ENCODE measurements at regions of chr10 and their contacts with region 1.

Region 1: GRCh38 chr10:80699602-80700039 is 161.9 kb downstream of the SH2D4B start:
- DNase-seq: peak; percentile 87
- H3K4me3 Mint-ChIP-seq: no peak overlapping the region
- H3K27ac Mint-ChIP-seq: no peak overlapping the region
- H3K4me1 Mint-ChIP-seq: no peaks in the 10 kb centered on the region
- H3K27me3 Mint-ChIP-seq: no peaks in the 10 kb centered on the region

Region 2: GRCh38 chr10:80686734-80687475 is 12.7 kb before region 1 on chr10:
- CTCF ChIA-PET with region 1: interaction called, 10 read pairs
- intact Hi-C with region 1: no loop called
- DNase-seq: no peak
- H3K4me3 Mint-ChIP-seq: no peak overlapping the region
- H3K27ac Mint-ChIP-seq: no peak overlapping the region
- H3K4me1 Mint-ChIP-seq: no peaks in the 10 kb centered on the region
- H3K27me3 Mint-ChIP-seq: peaks cover 8% of the 10 kb centered on the region

Region 3: DNA sequence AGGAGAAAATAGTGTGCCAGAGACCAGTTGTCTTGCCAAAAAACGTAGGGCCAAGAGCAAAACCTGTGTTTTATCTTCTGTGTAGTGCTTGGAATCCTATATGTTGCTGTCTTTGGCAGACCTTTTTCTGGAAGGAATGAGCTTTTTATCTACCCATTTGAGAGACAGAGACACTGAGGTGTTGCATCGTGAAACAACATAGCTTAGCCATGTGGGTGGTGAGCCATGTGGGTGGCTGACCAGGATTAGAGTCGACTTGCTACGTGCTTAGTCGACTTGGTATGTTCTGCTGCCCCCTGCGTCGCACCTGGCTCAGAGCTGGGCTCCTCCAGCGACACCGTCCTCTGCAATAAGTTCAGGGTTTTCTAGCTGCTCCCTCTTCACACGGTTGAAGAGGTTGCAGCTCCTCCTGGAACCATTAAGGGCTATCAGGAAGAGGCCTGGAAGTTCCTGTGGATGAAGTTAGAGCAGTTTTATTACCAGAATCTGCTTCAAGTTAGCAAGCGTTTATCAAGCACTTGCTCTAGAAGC is 13.8 kb after region 1 on chr10:
- CTCF ChIA-PET with region 1: interaction called, 15 read pairs
- intact Hi-C with region 1: no loop called
- DNase-seq: no peak
- H3K4me3 Mint-ChIP-seq: no peak overlapping the region
- H3K27ac Mint-ChIP-seq: no peak overlapping the region
- H3K4me1 Mint-ChIP-seq: no peaks in the 10 kb centered on the region
- H3K27me3 Mint-ChIP-seq: no peaks in the 10 kb centered on the region

Region 4: DNA sequence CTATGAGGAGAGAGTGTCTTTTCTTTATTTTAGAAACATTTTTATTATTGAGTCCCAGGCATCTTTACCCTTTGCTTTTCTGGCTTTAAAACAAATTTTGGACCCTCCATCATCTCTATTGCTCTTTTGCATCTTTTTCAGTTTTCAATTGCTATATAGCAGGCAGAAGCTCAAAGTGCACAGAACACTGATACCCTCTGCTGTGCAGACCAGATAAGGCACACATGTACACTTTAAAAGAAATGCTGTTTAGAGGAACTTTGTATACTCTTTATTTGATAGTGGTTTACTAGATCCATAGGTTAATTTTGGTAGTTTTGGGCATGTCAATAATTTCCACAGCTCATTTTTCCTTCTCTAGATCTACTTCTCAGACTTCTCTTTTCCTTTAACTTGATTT is 162.3 kb after region 1 on chr10:
- CTCF ChIA-PET with region 1: interaction called, 3 read pairs
- intact Hi-C with region 1: loop called (anchors 1 kb)
- DNase-seq: no peak
- H3K4me3 Mint-ChIP-seq: no peak overlapping the region
- H3K27ac Mint-ChIP-seq: no peak overlapping the region
- H3K4me1 Mint-ChIP-seq: no peaks in the 10 kb centered on the region
- H3K27me3 Mint-ChIP-seq: peaks cover 6% of the 10 kb centered on the region

Region 5: GRCh38 chr10:80924063-80924952 is 224.7 kb after region 1 on chr10:
- CTCF ChIA-PET with region 1: interaction called, 22 read pairs
- intact Hi-C with region 1: loop called (anchors 1 kb)
- DNase-seq: peak; percentile 42
- H3K4me3 Mint-ChIP-seq: no peak overlapping the region
- H3K27ac Mint-ChIP-seq: no peak overlapping the region
- H3K4me1 Mint-ChIP-seq: no peaks in the 10 kb centered on the region
- H3K27me3 Mint-ChIP-seq: peaks cover 12% of the 10 kb centered on the region

Region 6: DNA sequence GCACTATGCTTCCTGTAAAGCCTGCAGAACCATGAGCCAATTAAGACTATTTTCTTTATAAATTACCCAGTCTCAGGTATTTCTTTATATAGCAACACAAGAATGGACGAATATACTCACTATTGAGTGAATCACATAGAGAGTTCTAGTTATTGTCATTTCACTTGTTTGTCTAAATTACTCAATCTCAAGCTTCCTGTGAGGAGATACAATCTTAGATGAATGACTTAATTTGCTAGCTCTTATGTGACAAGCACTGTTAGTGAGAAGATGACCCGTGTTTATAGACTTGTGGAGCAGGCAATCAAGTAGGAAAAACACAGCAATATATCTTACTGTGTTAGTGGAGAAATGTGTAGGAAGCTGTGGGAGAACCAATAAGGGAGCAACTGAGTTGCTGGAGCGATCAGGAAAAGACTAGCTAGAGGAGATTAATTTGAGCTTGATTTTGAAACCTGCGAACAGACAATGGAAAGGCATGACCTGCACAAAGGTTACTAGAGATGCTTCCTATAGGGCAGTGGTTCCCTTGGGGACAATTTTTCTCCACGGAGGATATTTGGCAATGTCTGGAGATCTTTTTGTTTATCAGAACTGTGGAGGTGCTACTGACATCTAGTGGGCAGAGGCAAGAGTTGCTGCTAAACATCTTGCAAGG is 319.2 kb after region 1 on chr10:
- CTCF ChIA-PET with region 1: interaction called, 17 read pairs
- intact Hi-C with region 1: loop called (anchors 1 kb)
- DNase-seq: peak; percentile 45
- H3K4me3 Mint-ChIP-seq: no peak overlapping the region
- H3K27ac Mint-ChIP-seq: no peak overlapping the region
- H3K4me1 Mint-ChIP-seq: no peaks in the 10 kb centered on the region
- H3K27me3 Mint-ChIP-seq: peaks cover 2% of the 10 kb centered on the region

Region 7: DNA sequence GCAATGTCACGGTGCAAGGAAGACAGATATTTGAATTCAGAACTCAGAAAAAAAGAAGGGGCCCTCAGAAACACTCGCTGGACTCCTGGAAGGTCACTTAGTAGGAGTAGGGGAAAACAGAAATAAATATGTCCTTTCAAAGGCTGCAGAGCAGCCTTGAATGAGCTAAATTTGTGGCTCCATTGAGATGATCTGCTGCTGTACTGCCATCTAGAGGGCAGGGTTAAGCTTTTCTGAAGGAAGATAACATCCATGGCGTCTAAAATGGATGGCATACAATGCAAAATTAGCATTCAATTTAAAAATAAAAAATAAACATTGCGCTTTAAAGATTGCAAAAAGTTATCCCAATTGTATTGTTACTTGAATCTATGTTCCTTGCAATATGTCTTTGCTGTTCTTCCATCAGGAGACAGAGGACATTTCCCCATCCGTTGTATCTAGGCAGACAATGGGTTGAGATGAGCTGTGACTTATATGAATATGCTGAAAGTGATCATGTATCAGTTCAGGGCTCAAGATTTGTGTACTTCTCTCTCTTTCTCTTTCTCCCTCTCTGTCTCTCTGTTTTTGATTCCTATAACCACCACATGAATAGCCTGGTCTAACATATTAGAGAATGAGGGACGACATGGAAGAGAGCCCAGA is 480.3 kb after region 1 on chr10:
- CTCF ChIA-PET with region 1: interaction called, 3 read pairs
- intact Hi-C with region 1: loop called (anchors 1 kb)
- DNase-seq: peak; percentile 13
- H3K4me3 Mint-ChIP-seq: no peak overlapping the region
- H3K27ac Mint-ChIP-seq: no peak overlapping the region
- H3K4me1 Mint-ChIP-seq: no peaks in the 10 kb centered on the region
- H3K27me3 Mint-ChIP-seq: peaks cover 3% of the 10 kb centered on the region

Measured in activated naive CD4-positive, alpha-beta T cell treated with anti-CD3 and anti-CD28 coated beads for 36 hours (primary cell).